Stomach (tissue), 19 donors: ENCODE measurements at regions of chr7 and their contacts with region 1.

Region 1: GRCh38 chr7:83410989-83411591 is 237.8 kb downstream of the SEMA3E start:
- DNase-seq: peak; percentile 26 to 77
- H3K4me3 ChIP-seq: no peak overlapping the region
- H3K27ac ChIP-seq: no peak overlapping the region
- H3K4me1 ChIP-seq: peaks cover 0 to 6% (median 0%) of the 10 kb centered on the region in 4 donors
- H3K27me3 ChIP-seq: no peaks in the 10 kb centered on the region
- CTCF ChIP-seq: peak in 4 of 7 experiments; percentile 32 to 57 (median 53)
- EP300 ChIP-seq: no peak
- POLR2A ChIP-seq: no peak

Region 2: DNA sequence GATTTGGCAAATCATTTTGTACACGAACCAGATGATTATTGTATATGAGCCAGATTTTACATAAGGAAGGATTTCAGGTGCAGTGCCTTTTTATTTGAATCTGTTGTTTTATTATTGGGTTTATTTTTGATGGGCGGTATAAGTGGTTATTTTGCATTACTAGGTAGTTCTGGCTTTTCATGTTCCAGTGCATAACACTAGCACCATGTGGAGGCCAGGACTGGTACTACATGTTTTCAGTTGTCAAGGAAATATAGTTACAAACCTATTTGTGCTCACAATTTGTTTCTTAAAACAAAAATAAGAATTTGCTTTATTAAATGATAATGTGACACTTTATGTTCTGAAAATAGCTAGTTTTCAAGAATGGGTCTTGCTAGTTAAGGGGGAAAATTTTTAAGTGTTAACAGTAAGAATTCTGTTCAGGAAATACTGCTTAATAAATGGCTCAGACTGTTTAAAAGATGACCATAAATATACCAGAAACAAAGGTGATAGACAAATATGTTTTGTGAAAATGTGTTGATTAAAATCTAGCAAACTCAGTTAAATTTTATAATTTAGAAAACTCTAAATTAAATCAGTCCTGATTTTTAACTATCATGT is 245.0 kb after region 1 on chr7:
- intact Hi-C with region 1: loop called (anchors 5 kb)
- DNase-seq: peak; percentile 37 to 67
- H3K4me3 ChIP-seq: no peak overlapping the region
- H3K27ac ChIP-seq: no peak overlapping the region
- H3K4me1 ChIP-seq: no peaks in the 10 kb centered on the region
- H3K27me3 ChIP-seq: no peaks in the 10 kb centered on the region
- CTCF ChIP-seq: peak in 5 of 7 experiments; percentile 63 to 75 (median 67)
- EP300 ChIP-seq: no peak
- POLR2A ChIP-seq: no peak